HepG2 (cell line): ENCODE measurements at regions of chr2 and their contacts with region 1.

Region 1: GRCh38 chr2:73020657-73021370 is 50.7 kb downstream of the SFXN5 start:
- DNase-seq: peak; percentile 97
- ATAC-seq: peak; percentile 91
- H3K4me3 ChIP-seq: peak overlapping the region in 1 of 3 experiments; percentile 29; a peak in 1 of 6 replicates
- H3K27ac ChIP-seq: peak overlapping the region; percentile 71
- H3K4me1 ChIP-seq: peaks cover 35% of the 10 kb centered on the region
- H3K27me3 ChIP-seq: no peaks in the 10 kb centered on the region
- CTCF ChIP-seq: 0 out of 2 replicates have a peak, but pooled peaks have one; percentile 14
- EP300 ChIP-seq: peak in 1 of 2 experiments; percentile 79; a peak in 2 of 4 replicates
- POLR2A ChIP-seq: no peak
- RAD21 ChIP-seq: peak; percentile 51

Region 2: GRCh38 chr2:72973566-72974435 is 47.0 kb before region 1 on chr2:
- CTCF ChIA-PET with region 1: no interaction called
- POLR2A ChIA-PET with region 1: no interaction called
- in situ Hi-C with region 1: no loop called
- intact Hi-C with region 1: no loop called
- DNase-seq: peak; percentile 58
- ATAC-seq: peak; percentile 97
- H3K4me3 ChIP-seq: no peak overlapping the region
- H3K27ac ChIP-seq: no peak overlapping the region
- H3K4me1 ChIP-seq: no peaks in the 10 kb centered on the region
- H3K27me3 ChIP-seq: no peaks in the 10 kb centered on the region
- CTCF ChIP-seq: peak; percentile 93
- EP300 ChIP-seq: no peak
- POLR2A ChIP-seq: no peak
- RAD21 ChIP-seq: peak; percentile 77

Region 3: GRCh38 chr2:73071360-73072133 is 50.7 kb after region 1 on chr2 and contains the start of gene SFXN5:
- CTCF ChIA-PET with region 1: no interaction called
- POLR2A ChIA-PET with region 1: interaction called, 23 read pairs
- in situ Hi-C with region 1: no loop called
- intact Hi-C with region 1: loop called (anchors 1 kb)
- DNase-seq: peak; percentile 95
- ATAC-seq: peak; percentile 89
- H3K4me3 ChIP-seq: peak within 1 kb of the TSS; percentile 81 to 98 (median 95)
- H3K27ac ChIP-seq: peak within 1 kb of the TSS; percentile 89
- H3K4me1 ChIP-seq: peaks cover 53% of the 10 kb centered on the region
- H3K27me3 ChIP-seq: no peaks in the 10 kb centered on the region; a peak in 1 of 5 replicates
- CTCF ChIP-seq: peak; percentile 33; the same call in 1 of the 2 replicates
- EP300 ChIP-seq: 0 out of 4 replicates have a peak, but pooled peaks of 1 of the 2 experiments have one; percentile 6
- POLR2A ChIP-seq: peak; percentile 82 to 90
- RAD21 ChIP-seq: peak; percentile 34; the same call in 1 of the 2 replicates
- total RNA-seq, gene SFXN5: 22.2 and 34.9 TPM in 2 replicates